Transverse colon (tissue), 4 donors: ENCODE measurements at regions of chr17 and their contacts with region 1.

Region 1: DNA sequence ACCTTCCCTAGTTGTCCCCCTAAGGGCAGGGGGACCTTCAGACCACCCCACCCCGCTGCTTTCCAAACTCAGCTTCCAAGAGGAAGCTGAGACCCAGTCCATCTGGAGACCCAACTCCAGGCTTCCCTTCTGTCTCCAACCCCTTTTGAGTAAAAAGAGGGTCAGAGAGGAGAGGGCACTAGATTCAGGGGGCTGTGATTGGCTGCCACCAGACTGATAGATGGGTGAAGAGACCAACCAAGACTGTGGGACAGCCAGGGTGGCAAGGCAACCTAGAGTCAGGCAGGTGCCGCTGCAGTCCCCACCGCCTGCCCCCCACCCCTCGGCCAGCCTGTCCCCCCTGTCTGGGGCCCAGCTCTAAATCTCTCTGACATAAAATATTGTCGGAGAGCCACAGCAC is 92.5 kb downstream of the SDK2 start:
- DNase-seq: no peak
- H3K4me3 ChIP-seq: no peak overlapping the region
- H3K27ac ChIP-seq: no peak overlapping the region
- H3K4me1 ChIP-seq: no peaks in the 10 kb centered on the region
- H3K27me3 ChIP-seq: peaks cover 4% of the 10 kb centered on the region
- CTCF ChIP-seq: no peak
- EP300 ChIP-seq: no peak
- POLR2A ChIP-seq: no peak

Region 2: DNA sequence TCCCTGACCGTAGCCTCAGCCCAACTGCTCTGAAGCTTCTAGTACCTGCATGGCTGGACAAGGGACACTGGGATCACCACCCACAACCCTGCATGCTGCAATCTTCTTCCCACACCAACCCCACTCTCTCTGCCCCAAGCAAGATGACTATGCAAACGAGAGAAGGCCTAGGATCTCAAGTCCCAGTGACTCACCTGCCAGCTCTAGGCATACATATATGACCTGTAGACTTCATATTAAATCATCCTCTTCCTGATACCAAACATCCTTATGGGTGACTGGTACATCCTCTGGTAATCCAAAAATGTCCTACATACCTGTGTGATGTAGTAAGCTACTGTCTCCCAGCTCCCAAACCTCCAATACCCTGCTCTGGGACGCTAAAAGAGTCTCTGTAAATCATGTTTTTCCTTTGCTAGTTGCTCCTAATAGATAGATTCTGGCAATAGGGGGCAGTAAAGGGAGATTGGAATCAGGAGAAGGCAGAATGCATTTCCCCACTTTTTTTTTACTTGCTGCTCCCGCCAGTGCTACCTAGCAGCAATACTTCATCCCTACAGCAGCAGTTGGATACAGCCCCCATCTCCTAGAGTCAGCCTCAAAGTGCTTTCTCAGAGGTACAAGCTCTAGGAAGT is 1474.3 kb before region 1 on chr17:
- in situ Hi-C with region 1: no loop called
- intact Hi-C with region 1: loop called (anchors 5 kb)
- DNase-seq: no peak
- H3K4me3 ChIP-seq: no peak overlapping the region
- H3K27ac ChIP-seq: no peak overlapping the region
- H3K4me1 ChIP-seq: no peaks in the 10 kb centered on the region
- H3K27me3 ChIP-seq: no peaks in the 10 kb centered on the region
- CTCF ChIP-seq: no peak
- EP300 ChIP-seq: no peak
- POLR2A ChIP-seq: no peak

Region 3: DNA sequence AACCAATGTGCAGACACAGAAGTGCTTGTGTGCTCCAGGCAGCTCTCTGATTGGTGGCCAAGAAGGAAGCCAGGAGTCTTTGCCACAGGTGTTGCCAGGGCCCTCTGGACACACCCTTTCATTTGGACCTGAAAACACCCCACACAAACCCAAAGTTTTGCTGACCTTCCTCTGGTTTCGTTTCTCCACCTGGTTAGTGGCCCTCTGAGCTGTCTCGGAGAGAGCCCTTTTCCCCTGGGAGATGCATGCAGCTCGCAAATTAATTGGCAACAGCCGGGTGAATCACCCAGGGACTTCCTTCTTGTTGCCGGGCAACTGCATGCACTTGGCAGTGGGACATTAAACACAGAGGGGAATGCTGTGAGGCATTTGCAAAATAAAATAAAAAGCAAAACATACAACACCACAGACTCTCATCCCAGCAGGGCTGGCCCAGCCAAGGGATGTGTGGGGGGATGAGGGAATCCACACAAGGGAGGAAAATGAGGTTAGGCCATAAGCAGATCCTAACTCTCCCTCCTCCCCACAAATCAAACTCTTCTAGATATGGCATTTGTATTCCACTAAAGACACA is 1144.3 kb before region 1 on chr17:
- in situ Hi-C with region 1: no loop called
- intact Hi-C with region 1: no loop called
- DNase-seq: peak; percentile 77
- H3K4me3 ChIP-seq: no peak overlapping the region
- H3K27ac ChIP-seq: peak overlapping the region; percentile 55 to 76 (median 66)
- H3K4me1 ChIP-seq: peaks cover 13 to 24% (median 17%) of the 10 kb centered on the region in 4 donors
- H3K27me3 ChIP-seq: no peaks in the 10 kb centered on the region
- CTCF ChIP-seq: no peak
- EP300 ChIP-seq: no peak
- POLR2A ChIP-seq: no peak

Region 4: GRCh38 chr17:73613271-73614233 is 61.8 kb after region 1 on chr17:
- in situ Hi-C with region 1: no loop called
- intact Hi-C with region 1: no loop called
- DNase-seq: no peak
- H3K4me3 ChIP-seq: no peak overlapping the region
- H3K27ac ChIP-seq: no peak overlapping the region
- H3K4me1 ChIP-seq: no peaks in the 10 kb centered on the region
- H3K27me3 ChIP-seq: no peaks in the 10 kb centered on the region
- CTCF ChIP-seq: no peak
- EP300 ChIP-seq: no peak
- POLR2A ChIP-seq: no peak